Caco-2 (cell line): ENCODE measurements at regions of chr16 and their contacts with region 1.

Region 1: DNA sequence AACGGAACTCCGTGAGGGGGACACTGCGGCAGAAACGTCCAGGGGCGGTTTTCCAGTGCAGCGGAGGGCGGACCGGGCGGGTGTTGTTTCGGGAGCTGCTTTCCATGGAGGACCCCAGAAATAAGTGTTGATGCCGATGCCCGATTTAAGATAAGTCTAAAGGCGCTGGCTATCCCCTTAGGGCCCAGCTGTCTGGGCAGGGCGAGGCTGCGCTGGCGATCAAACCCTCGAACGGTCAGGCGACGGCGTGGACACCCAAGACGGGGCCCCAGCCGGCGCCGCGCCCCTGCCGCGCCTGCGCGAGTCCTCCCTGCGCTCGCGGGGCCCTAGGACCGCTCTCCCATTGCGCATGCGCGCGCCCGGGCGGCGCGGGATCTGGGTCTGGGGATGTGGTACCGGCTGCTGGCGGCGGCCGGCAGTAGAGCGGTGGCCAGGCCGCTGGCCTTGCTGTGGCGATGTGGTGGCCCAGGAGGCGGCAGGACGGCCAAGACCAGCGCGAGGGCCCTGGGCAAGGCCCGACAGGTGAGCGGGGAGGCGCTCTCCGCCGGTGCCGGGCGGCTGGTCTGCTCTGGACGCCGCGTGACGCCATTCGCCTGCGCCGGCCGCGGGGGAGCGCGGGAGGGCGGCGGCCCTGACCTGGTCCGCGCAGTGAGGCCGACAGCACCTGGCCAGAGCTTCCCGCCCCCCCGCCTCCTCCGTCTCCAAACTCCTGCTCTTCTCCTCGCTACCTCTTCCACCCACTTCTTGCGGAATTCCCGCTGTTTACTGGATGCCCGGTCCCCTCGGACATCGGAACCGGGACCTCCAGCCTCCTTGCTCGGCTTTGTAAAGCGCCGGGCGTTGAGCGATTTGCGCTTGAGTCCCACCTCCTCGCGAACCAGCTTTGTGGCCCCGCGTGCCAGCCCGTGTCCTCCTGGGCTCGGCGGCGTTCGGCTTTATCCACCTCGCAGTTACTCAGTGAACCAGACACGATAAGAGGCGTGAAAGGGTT is 24.0 kb downstream of the DEF8 start:
- DNase-seq: peak; percentile 92 to 96
- H3K4me3 ChIP-seq: peak overlapping the region; percentile 99
- H3K4me3 Mint-ChIP-seq: peak overlapping the region; percentile 100
- H3K27ac Mint-ChIP-seq: peak overlapping the region; percentile 100
- H3K4me1 ChIP-seq: peaks cover 14% of the 10 kb centered on the region
- H3K4me1 Mint-ChIP-seq: peaks cover 28% of the 10 kb centered on the region
- H3K27me3 ChIP-seq: no peaks in the 10 kb centered on the region
- H3K27me3 Mint-ChIP-seq: no peaks in the 10 kb centered on the region
- CTCF ChIP-seq: no peak

Region 2: GRCh38 chr16:89984216-89984615 is 11.7 kb after region 1 on chr16:
- CTCF ChIA-PET with region 1: no interaction called
- POLR2A ChIA-PET with region 1: no interaction called
- intact Hi-C with region 1: no loop called
- DNase-seq: no peak
- H3K4me3 ChIP-seq: no peak overlapping the region
- H3K4me3 Mint-ChIP-seq: no peak overlapping the region
- H3K27ac Mint-ChIP-seq: no peak overlapping the region
- H3K4me1 ChIP-seq: no peaks in the 10 kb centered on the region
- H3K4me1 Mint-ChIP-seq: no peaks in the 10 kb centered on the region
- H3K27me3 ChIP-seq: no peaks in the 10 kb centered on the region
- H3K27me3 Mint-ChIP-seq: no peaks in the 10 kb centered on the region
- CTCF ChIP-seq: no peak

Region 3: GRCh38 chr16:90019543-90020259 is 47.2 kb after region 1 on chr16:
- CTCF ChIA-PET with region 1: interaction called, 3 read pairs
- POLR2A ChIA-PET with region 1: no interaction called
- intact Hi-C with region 1: loop called (anchors 2 kb)
- DNase-seq: peak; percentile 82 to 91
- H3K4me3 ChIP-seq: peak overlapping the region; percentile 88
- H3K4me3 Mint-ChIP-seq: peak overlapping the region; percentile 92
- H3K27ac Mint-ChIP-seq: peak overlapping the region; percentile 99
- H3K4me1 ChIP-seq: peaks cover 34% of the 10 kb centered on the region
- H3K4me1 Mint-ChIP-seq: peaks cover 26% of the 10 kb centered on the region
- H3K27me3 ChIP-seq: no peaks in the 10 kb centered on the region
- H3K27me3 Mint-ChIP-seq: no peaks in the 10 kb centered on the region
- CTCF ChIP-seq: peak in 1 of 2 experiments; percentile 43

Region 4: DNA sequence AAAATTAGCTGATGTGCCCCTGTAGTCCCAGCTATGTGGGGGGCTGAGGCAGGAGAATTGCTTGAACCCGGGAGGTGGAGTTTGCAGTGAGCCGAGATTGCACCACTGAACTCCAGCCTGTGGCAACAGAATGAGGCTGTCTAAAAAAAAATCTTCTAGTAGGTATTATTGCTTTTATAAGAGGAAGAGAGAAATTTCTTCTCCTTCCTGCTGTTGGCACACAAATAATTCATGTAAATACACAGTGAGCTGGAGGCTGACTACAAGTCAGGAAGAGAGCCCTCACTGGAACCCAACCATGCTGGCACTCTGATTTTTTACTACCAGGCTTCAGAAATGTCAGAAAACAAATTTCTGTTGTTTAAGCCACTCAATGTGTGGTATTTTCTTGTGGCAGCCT is 97.9 kb after region 1 on chr16:
- CTCF ChIA-PET with region 1: no interaction called
- POLR2A ChIA-PET with region 1: no interaction called
- intact Hi-C with region 1: no loop called
- DNase-seq: no peak
- H3K4me3 ChIP-seq: no peak overlapping the region
- H3K4me3 Mint-ChIP-seq: no peak overlapping the region
- H3K27ac Mint-ChIP-seq: no peak overlapping the region
- H3K4me1 ChIP-seq: no peaks in the 10 kb centered on the region
- H3K4me1 Mint-ChIP-seq: no peaks in the 10 kb centered on the region
- H3K27me3 ChIP-seq: no peaks in the 10 kb centered on the region
- H3K27me3 Mint-ChIP-seq: peaks cover 2% of the 10 kb centered on the region
- CTCF ChIP-seq: no peak